ENCODE measurements at regions of chr7 and their contacts with region 1.

Region 1: DNA sequence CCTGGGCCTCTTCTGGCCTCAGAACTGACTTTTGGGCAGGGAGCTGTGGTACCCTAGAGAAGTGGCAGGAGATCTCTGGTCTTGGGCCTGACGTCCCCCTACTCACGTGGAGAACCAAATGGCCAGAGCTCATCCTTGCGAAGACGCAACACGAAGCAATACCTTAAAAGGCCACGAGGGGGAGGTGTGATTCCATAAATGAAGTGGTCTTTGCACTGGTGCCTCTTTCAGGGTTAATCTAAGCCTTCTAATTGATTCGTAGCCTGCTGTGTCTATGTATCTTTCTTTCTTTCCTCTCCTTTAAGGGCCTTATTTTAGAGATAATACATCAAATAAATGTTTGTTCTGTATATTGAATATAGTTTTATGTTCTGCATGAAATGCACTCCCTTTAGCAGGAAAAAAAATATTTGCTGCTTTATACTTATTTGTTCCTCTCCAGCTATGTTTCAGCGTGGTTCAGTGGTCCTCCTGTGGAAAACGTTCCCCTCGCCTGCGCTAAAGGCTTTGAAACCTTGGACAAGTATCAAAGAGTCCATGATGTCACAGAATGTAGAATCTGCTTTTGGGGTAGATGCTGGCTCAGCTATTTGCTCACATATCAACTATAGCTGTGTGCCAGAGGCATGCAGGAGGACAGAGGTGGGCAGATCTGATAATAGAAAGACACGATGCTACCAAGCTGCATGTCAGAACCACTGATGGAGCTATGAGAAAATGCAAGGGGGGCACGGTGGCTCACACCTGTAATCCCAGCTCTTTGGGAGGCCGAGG is 41.0 kb downstream of the STRA8 start:
- DNase-seq: peak; percentile 87
- ATAC-seq: peak; percentile 94
- H3K4me3 ChIP-seq: no peak overlapping the region
- H3K27ac ChIP-seq: no peak overlapping the region
- H3K4me1 ChIP-seq: no peaks in the 10 kb centered on the region
- H3K27me3 ChIP-seq: no peaks in the 10 kb centered on the region
- CTCF ChIP-seq: peak; percentile 82

Region 2: GRCh38 chr7:135211179-135211945 is 63.3 kb before region 1 on chr7 and contains the start of gene WDR91:
- CTCF ChIA-PET with region 1: interaction called, 3 read pairs
- POLR2A ChIA-PET with region 1: no interaction called
- intact Hi-C with region 1: loop called (anchors 10 kb)
- DNase-seq: peak; percentile 91
- ATAC-seq: peak; percentile 90
- H3K4me3 ChIP-seq: peak within 1 kb of the TSS; percentile 100
- H3K27ac ChIP-seq: no peak within 1 kb of the TSS
- H3K4me1 ChIP-seq: peaks cover 8% of the 10 kb centered on the region; the same call in 1 of the 2 replicates
- H3K27me3 ChIP-seq: no peaks in the 10 kb centered on the region
- CTCF ChIP-seq: peak; percentile 28; the same call in 1 of the 2 replicates
- total RNA-seq, gene WDR91: 12.3 and 23.0 TPM in 2 replicates

Region 3: GRCh38 chr7:135335628-135336139 is 61.0 kb after region 1 on chr7:
- CTCF ChIA-PET with region 1: interaction called, 19 read pairs
- POLR2A ChIA-PET with region 1: no interaction called
- intact Hi-C with region 1: no loop called
- DNase-seq: peak; percentile 79
- ATAC-seq: peak; percentile 92
- H3K4me3 ChIP-seq: no peak overlapping the region
- H3K27ac ChIP-seq: no peak overlapping the region
- H3K4me1 ChIP-seq: peaks cover 14% of the 10 kb centered on the region
- H3K27me3 ChIP-seq: no peaks in the 10 kb centered on the region
- CTCF ChIP-seq: peak; percentile 84

Region 4: GRCh38 chr7:135420786-135421185 is 146.1 kb after region 1 on chr7:
- CTCF ChIA-PET with region 1: interaction called, 11 read pairs
- POLR2A ChIA-PET with region 1: interaction called, 3 read pairs
- intact Hi-C with region 1: no loop called
- DNase-seq: peak; percentile 12
- ATAC-seq: no peak
- H3K4me3 ChIP-seq: no peak overlapping the region
- H3K27ac ChIP-seq: no peak overlapping the region
- H3K4me1 ChIP-seq: no peaks in the 10 kb centered on the region
- H3K27me3 ChIP-seq: no peaks in the 10 kb centered on the region
- CTCF ChIP-seq: no peak

Region 5: DNA sequence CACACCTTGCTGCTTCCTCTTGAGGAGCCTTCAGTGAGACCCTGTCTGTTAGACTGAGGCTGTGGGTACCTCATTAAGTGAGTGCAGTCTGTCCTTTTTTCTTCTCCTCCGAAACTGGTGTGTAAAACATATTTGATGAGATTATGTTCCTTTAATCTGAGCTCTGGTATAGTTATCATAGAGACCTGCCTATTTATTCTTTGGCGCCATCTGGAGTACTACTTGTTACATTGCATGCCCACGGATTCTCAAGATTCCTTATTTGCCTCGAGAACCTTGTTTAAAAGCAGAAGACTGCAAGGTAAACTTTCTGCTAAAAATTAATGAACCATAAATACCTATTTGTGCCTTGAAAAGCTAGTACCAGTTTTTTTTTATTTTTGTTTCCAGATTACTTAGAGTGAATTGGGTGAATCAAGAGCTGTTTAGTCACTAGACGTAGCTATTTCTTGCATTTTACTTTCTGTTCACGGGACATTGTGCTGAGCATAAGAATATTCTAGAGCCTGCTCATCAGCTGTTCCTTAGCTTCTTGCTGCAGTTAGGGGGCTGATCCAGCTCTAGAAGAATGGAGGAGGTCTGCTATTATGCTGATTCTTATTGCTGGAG is 370.7 kb after region 1 on chr7:
- CTCF ChIA-PET with region 1: interaction called, 13 read pairs
- POLR2A ChIA-PET with region 1: no interaction called
- intact Hi-C with region 1: loop called (anchors 1 kb)
- DNase-seq: peak; percentile 63
- ATAC-seq: peak; percentile 80
- H3K4me3 ChIP-seq: no peak overlapping the region
- H3K27ac ChIP-seq: no peak overlapping the region
- H3K4me1 ChIP-seq: no peaks in the 10 kb centered on the region
- H3K27me3 ChIP-seq: no peaks in the 10 kb centered on the region
- CTCF ChIP-seq: peak; percentile 67

Region 6: GRCh38 chr7:135795846-135796570 is 521.3 kb after region 1 on chr7:
- CTCF ChIA-PET with region 1: no interaction called
- POLR2A ChIA-PET with region 1: no interaction called
- intact Hi-C with region 1: loop called (anchors 10 kb)
- DNase-seq: no peak
- ATAC-seq: no peak
- H3K4me3 ChIP-seq: no peak overlapping the region
- H3K27ac ChIP-seq: no peak overlapping the region
- H3K4me1 ChIP-seq: no peaks in the 10 kb centered on the region
- H3K27me3 ChIP-seq: no peaks in the 10 kb centered on the region
- CTCF ChIP-seq: no peak